ENCODE measurements at regions of chrX and their contacts with region 1.

Region 1: GRCh38 chrX:130704053-130705038 is 198.7 kb downstream of the ENOX2 start:
- DNase-seq: no peak
- ATAC-seq: no peak
- H3K4me3 Mint-ChIP-seq: no peak overlapping the region
- H3K27ac Mint-ChIP-seq: no peak overlapping the region
- H3K4me1 Mint-ChIP-seq: no peaks in the 10 kb centered on the region
- H3K27me3 Mint-ChIP-seq: no peaks in the 10 kb centered on the region

Region 2: GRCh38 chrX:130658310-130658709 is 46.0 kb before region 1 on chrX:
- CTCF ChIA-PET with region 1: no interaction called
- POLR2A ChIA-PET with region 1: no interaction called
- intact Hi-C with region 1: loop called in 1 of 2 experiments (anchors 1 kb)
- DNase-seq: no peak
- ATAC-seq: no peak
- H3K4me3 Mint-ChIP-seq: no peak overlapping the region
- H3K27ac Mint-ChIP-seq: no peak overlapping the region
- H3K4me1 Mint-ChIP-seq: no peaks in the 10 kb centered on the region
- H3K27me3 Mint-ChIP-seq: no peaks in the 10 kb centered on the region

Region 3: GRCh38 chrX:130772105-130772775 is 67.9 kb after region 1 on chrX:
- CTCF ChIA-PET with region 1: no interaction called
- POLR2A ChIA-PET with region 1: no interaction called
- intact Hi-C with region 1: no loop called
- DNase-seq: no peak
- ATAC-seq: peak; percentile 26
- H3K4me3 Mint-ChIP-seq: no peak overlapping the region
- H3K27ac Mint-ChIP-seq: no peak overlapping the region
- H3K4me1 Mint-ChIP-seq: peaks cover 14% of the 10 kb centered on the region
- H3K27me3 Mint-ChIP-seq: no peaks in the 10 kb centered on the region

Region 4: GRCh38 chrX:130810561-130810960 is 106.2 kb after region 1 on chrX:
- CTCF ChIA-PET with region 1: no interaction called
- POLR2A ChIA-PET with region 1: no interaction called
- intact Hi-C with region 1: no loop called
- DNase-seq: no peak
- ATAC-seq: no peak
- H3K4me3 Mint-ChIP-seq: no peak overlapping the region
- H3K27ac Mint-ChIP-seq: no peak overlapping the region
- H3K4me1 Mint-ChIP-seq: no peaks in the 10 kb centered on the region
- H3K27me3 Mint-ChIP-seq: no peaks in the 10 kb centered on the region